Natural killer cell (primary cell): ENCODE measurements at regions of chr19 and their contacts with region 1.

Region 1: GRCh38 chr19:18089726-18090125 is 3.0 kb upstream of the IL12RB1 start:
- DNase-seq: peak in 1 of 2 donors; percentile 22
- ATAC-seq: no peak
- H3K4me3 ChIP-seq: no peak overlapping the region
- H3K4me3 Mint-ChIP-seq: peak overlapping the region; percentile 87
- H3K27ac ChIP-seq: peak overlapping the region; percentile 98
- H3K27ac Mint-ChIP-seq: peak overlapping the region; percentile 92 to 99
- H3K4me1 ChIP-seq: peaks cover 75% of the 10 kb centered on the region
- H3K4me1 Mint-ChIP-seq: peaks cover 41 to 58% of the 10 kb centered on the region in 2 donors
- H3K27me3 ChIP-seq: no peaks in the 10 kb centered on the region
- H3K27me3 Mint-ChIP-seq: no peaks in the 10 kb centered on the region
- CTCF ChIP-seq: no peak

Region 2: GRCh38 chr19:18044825-18045304 is 44.9 kb before region 1 on chr19:
- intact Hi-C with region 1: loop called (anchors 2 kb)
- DNase-seq: peak; percentile 84 to 94
- ATAC-seq: peak; percentile 93 to 99 (median 95)
- H3K4me3 ChIP-seq: peak overlapping the region; percentile 25
- H3K4me3 Mint-ChIP-seq: peak overlapping the region; percentile 60
- H3K27ac ChIP-seq: peak overlapping the region; percentile 74
- H3K27ac Mint-ChIP-seq: peak overlapping the region; percentile 82 to 94
- H3K4me1 ChIP-seq: peaks cover 31% of the 10 kb centered on the region
- H3K4me1 Mint-ChIP-seq: peaks cover 20 to 38% of the 10 kb centered on the region in 2 donors
- H3K27me3 ChIP-seq: no peaks in the 10 kb centered on the region
- H3K27me3 Mint-ChIP-seq: peaks cover 7 to 26% of the 10 kb centered on the region in 2 donors
- CTCF ChIP-seq: no peak

Region 3: GRCh38 chr19:18070181-18070580 is 19.5 kb before region 1 on chr19:
- intact Hi-C with region 1: no loop called
- DNase-seq: no peak
- ATAC-seq: no peak
- H3K4me3 ChIP-seq: no peak overlapping the region
- H3K4me3 Mint-ChIP-seq: no peak overlapping the region
- H3K27ac ChIP-seq: no peak overlapping the region
- H3K27ac Mint-ChIP-seq: no peak overlapping the region
- H3K4me1 ChIP-seq: peaks cover 13% of the 10 kb centered on the region
- H3K4me1 Mint-ChIP-seq: peaks cover 10 to 12% of the 10 kb centered on the region in 2 donors
- H3K27me3 ChIP-seq: no peaks in the 10 kb centered on the region
- H3K27me3 Mint-ChIP-seq: no peaks in the 10 kb centered on the region
- CTCF ChIP-seq: no peak